GM10248 (cell line): ENCODE measurements at regions of chr10 and their contacts with region 1.

Region 1: DNA sequence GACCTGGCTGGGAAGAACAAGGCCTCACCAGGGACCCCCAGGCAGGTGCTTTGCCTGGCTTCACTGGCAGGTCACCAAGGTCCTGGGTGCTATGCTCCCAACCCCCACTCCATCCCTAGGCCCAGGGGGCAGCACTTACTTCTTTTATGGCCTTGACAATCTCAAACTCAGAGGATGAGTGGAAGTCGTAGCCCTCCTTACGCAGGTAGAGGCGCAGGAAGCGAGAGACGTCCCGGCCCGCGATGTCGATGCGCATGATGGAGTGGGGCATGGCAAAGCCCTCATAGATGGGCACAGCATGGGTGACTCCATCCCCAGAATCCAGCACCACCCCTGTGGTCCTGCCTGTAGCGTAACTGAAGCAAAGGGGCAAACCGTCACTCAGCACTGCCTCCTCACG is 18.5 kb downstream of the ACTR1A start:
- DNase-seq: peak; percentile 4
- CTCF ChIP-seq: no peak

Region 2: GRCh38 chr10:101617102-101617823 is 866.8 kb before region 1 on chr10:
- CTCF ChIA-PET with region 1: no interaction called
- POLR2A ChIA-PET with region 1: no interaction called
- DNase-seq: peak; percentile 75
- CTCF ChIP-seq: peak; percentile 14

Region 3: GRCh38 chr10:102101152-102101551 is 382.9 kb before region 1 on chr10:
- CTCF ChIA-PET with region 1: no interaction called
- POLR2A ChIA-PET with region 1: no interaction called
- DNase-seq: no peak
- CTCF ChIP-seq: no peak

Region 4: GRCh38 chr10:102408728-102409603 is 75.1 kb before region 1 on chr10:
- CTCF ChIA-PET with region 1: interaction called, 19 read pairs
- POLR2A ChIA-PET with region 1: no interaction called
- DNase-seq: peak; percentile 75
- CTCF ChIP-seq: no peak

Region 5: DNA sequence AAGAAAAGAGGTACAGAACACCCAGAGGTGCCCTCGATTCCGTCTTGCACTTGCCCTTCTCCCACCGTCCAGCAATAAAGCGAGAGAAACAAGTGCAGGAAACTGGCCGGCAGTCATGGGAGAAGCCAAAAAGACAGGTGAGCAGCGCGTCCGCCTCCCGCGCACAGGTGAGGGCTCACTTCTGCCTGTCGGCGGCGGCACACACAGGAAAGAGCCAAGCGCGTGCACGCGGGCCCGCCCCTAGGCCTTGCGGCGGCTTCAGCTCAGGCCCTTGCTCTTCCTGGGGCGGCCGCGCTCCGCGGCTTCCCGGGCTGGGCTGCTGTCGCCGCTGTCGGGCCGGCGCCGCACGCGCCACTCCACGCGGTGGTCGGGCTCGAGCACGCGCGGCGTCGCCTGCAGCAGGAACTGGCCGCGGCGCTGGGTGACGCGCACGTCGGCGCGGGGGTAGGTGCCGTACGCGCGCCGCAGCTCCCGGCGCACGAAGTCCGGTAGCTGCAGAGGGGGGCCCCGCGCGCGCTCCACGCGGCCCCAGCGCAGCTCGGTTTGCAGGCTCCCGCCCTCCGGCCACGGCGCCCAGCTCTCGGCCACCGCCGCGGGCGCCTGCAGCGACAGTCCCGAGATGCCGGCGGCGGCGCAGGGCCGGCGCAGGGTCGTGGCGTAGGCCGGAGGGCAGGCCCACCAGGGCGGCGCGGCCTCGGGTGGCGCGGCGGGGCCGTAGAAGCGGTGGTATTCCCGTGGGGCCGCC is 33.7 kb before region 1 on chr10:
- CTCF ChIA-PET with region 1: interaction called, 30 read pairs
- POLR2A ChIA-PET with region 1: no interaction called
- DNase-seq: peak; percentile 90
- CTCF ChIP-seq: no peak

Region 6: GRCh38 chr10:102461187-102462054 is 22.6 kb before region 1 on chr10:
- CTCF ChIA-PET with region 1: interaction called, 46 read pairs
- POLR2A ChIA-PET with region 1: interaction called, 9 read pairs
- DNase-seq: peak; percentile 100
- CTCF ChIP-seq: no peak

Region 7: DNA sequence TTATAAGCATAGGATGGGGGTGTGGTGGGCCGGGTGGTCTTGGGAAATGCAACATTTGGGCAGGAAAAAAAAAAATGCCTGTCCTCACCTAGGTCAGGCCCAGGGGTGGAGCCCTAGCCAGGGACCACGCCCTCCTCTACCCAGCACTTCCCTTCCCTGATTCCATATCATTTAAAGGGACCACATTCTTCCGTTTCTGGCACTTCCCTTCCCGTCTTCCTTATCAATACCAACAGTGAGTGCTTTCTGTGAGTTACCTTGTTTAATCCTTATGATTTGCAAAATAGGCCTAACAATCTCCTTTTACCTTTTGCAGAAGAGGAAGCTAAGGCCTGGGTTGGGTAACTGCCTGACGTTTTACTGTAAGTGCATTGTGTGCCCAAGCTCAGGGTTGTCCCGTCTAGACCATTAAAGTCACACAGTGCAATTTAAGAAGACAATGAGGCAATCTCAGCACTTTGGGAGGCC is 16.0 kb before region 1 on chr10:
- CTCF ChIA-PET with region 1: interaction called, 46 read pairs
- POLR2A ChIA-PET with region 1: interaction called, 9 read pairs
- DNase-seq: no peak
- CTCF ChIP-seq: no peak

Region 8: GRCh38 chr10:102503281-102504220 is 19.5 kb after region 1 on chr10 and contains the start of gene SUFU:
- CTCF ChIA-PET with region 1: interaction called, 15 read pairs
- POLR2A ChIA-PET with region 1: interaction called, 3 read pairs
- DNase-seq: peak; percentile 98
- CTCF ChIP-seq: peak; percentile 81

Region 9: GRCh38 chr10:102859911-102860310 is 375.9 kb after region 1 on chr10:
- CTCF ChIA-PET with region 1: no interaction called
- POLR2A ChIA-PET with region 1: no interaction called
- DNase-seq: no peak
- CTCF ChIP-seq: no peak